Endothelial cell of umbilical vein (primary cell): ENCODE measurements at regions of chr4 and their contacts with region 1.

Region 1: DNA sequence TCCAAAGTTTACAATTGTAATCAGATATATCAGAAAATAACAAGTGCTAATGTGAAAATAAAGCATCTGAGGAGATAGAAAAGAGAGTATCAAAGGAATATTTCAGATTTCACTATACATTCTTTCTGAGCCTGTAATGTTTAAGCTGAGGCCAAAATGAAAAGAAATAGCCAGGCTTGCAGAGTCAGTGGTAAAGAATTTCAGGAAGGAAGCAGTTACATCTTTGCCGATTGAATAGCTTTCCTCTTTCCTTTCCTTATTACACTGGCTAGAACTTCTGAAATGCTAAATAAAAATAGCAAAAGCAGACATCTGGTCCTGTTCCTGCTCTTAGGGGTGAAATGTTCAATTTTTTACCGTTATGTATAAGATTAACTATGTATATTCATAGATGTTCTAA is 1441.6 kb upstream of the PCDH7 start:
- DNase-seq: peak; percentile 81
- H3K4me3 ChIP-seq: peak overlapping the region in 1 of 3 experiments; percentile 16
- H3K27ac ChIP-seq: peak overlapping the region; percentile 82
- H3K4me1 ChIP-seq: peaks cover 19% of the 10 kb centered on the region
- H3K27me3 ChIP-seq: no peaks in the 10 kb centered on the region
- CTCF ChIP-seq: no peak
- POLR2A ChIP-seq: no peak

Region 2: GRCh38 chr4:29081234-29081955 is 197.2 kb before region 1 on chr4:
- CTCF ChIA-PET with region 1: interaction called, 4 read pairs
- POLR2A ChIA-PET with region 1: no interaction called
- dilution Hi-C with region 1: no loop called
- intact Hi-C with region 1: loop called (anchors 5 kb)
- DNase-seq: peak; percentile 65
- H3K4me3 ChIP-seq: no peak overlapping the region
- H3K27ac ChIP-seq: no peak overlapping the region
- H3K4me1 ChIP-seq: no peaks in the 10 kb centered on the region
- H3K27me3 ChIP-seq: no peaks in the 10 kb centered on the region
- CTCF ChIP-seq: peak; percentile 26
- POLR2A ChIP-seq: no peak

Region 3: DNA sequence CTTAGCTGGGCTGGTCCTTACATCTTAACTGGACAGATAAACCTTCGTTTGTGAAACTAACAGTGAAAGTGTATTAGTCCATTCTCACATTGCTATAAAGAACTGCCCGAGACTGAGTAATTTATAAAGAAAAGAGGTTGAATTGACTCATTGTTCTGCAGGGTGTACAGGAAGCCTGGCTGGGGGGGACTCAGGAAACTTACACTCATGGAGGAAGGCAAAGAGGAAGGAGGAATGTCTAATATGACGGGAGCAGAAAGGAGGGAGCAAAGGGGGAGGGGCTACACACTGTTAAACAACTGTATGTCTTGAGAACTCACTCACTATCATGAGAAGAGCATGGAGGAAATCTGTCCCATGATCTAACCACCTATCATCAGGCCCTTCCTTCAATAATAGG is 124.9 kb before region 1 on chr4:
- CTCF ChIA-PET with region 1: no interaction called
- POLR2A ChIA-PET with region 1: no interaction called
- dilution Hi-C with region 1: no loop called
- intact Hi-C with region 1: loop called (anchors 1 kb)
- DNase-seq: peak; percentile 97
- H3K4me3 ChIP-seq: peak overlapping the region in 1 of 3 experiments; percentile 50
- H3K27ac ChIP-seq: peak overlapping the region; percentile 90
- H3K4me1 ChIP-seq: peaks cover 16% of the 10 kb centered on the region
- H3K27me3 ChIP-seq: no peaks in the 10 kb centered on the region
- CTCF ChIP-seq: no peak
- POLR2A ChIP-seq: no peak

Region 4: DNA sequence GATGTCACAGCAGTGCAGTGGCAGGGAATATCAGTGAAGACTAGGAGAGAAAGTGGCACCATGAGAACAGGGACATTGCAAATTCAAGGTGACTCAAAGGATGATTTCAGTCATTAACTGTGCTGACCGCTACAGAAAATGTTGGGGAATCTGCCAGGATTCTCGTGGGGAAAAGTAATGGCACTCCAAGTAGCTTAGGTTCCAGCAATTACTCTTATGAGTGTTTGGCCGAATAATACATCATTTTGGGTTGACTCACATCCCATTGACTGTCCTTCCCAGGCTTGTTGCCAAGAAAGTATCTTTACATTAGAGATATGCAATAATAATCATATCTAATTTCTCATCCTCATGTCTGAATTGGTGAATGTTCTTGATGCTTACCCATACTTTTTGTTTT is 30.5 kb after region 1 on chr4:
- CTCF ChIA-PET with region 1: no interaction called
- POLR2A ChIA-PET with region 1: no interaction called
- dilution Hi-C with region 1: no loop called
- intact Hi-C with region 1: loop called (anchors 1 kb)
- DNase-seq: peak; percentile 70
- H3K4me3 ChIP-seq: no peak overlapping the region
- H3K27ac ChIP-seq: peak overlapping the region; percentile 78
- H3K4me1 ChIP-seq: peaks cover 45% of the 10 kb centered on the region
- H3K27me3 ChIP-seq: no peaks in the 10 kb centered on the region
- CTCF ChIP-seq: no peak
- POLR2A ChIP-seq: no peak

Region 5: GRCh38 chr4:29326816-29327215 is 48.2 kb after region 1 on chr4:
- CTCF ChIA-PET with region 1: interaction called, 5 read pairs
- POLR2A ChIA-PET with region 1: no interaction called
- dilution Hi-C with region 1: no loop called
- intact Hi-C with region 1: loop called (anchors 1 kb)
- DNase-seq: peak; percentile 97
- H3K4me3 ChIP-seq: no peak overlapping the region
- H3K27ac ChIP-seq: peak overlapping the region; percentile 89
- H3K4me1 ChIP-seq: peaks cover 18% of the 10 kb centered on the region
- H3K27me3 ChIP-seq: no peaks in the 10 kb centered on the region
- CTCF ChIP-seq: no peak
- POLR2A ChIP-seq: no peak

Region 6: DNA sequence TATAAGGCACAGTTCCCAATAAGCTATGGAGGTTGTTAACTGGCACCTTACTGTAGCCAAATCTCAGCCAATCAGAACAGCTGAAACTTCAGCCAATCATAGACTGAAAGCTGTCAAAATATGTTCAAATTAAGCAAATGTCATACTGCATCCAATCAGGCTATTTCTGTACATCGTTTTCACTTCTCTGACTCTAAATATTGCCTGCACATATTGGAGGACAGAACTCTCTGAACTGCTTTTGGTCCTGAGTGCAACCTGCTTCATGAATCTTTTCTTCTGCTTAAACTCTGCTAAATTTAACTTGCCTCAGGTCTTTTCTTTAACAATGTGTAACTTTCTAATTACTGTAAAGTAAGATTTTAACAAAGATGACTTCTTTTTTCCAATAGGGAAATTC is 242.7 kb after region 1 on chr4:
- CTCF ChIA-PET with region 1: no interaction called
- POLR2A ChIA-PET with region 1: no interaction called
- dilution Hi-C with region 1: no loop called
- intact Hi-C with region 1: no loop called
- DNase-seq: no peak
- H3K4me3 ChIP-seq: no peak overlapping the region
- H3K27ac ChIP-seq: no peak overlapping the region
- H3K4me1 ChIP-seq: no peaks in the 10 kb centered on the region
- H3K27me3 ChIP-seq: no peaks in the 10 kb centered on the region
- CTCF ChIP-seq: no peak
- POLR2A ChIP-seq: no peak

Region 7: DNA sequence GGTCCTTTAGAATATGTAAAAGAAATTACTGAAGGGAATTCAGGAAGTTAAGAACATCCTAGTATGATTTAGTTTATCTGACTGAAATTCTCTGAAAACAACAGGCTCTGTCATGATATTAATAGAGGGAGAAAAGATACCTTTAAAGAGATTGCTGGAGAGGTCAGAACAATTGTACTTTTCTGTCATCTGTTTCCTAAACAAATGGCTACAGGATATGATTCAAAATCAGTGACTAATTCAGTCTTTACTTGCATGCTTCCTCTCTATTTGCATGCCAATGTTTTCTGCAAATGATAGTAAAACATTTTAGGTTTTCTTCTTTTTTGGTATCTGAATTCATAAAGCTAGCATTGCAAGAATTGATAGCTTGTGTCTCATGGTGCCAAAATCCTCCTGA is 824.9 kb after region 1 on chr4:
- CTCF ChIA-PET with region 1: no interaction called
- POLR2A ChIA-PET with region 1: no interaction called
- dilution Hi-C with region 1: no loop called
- intact Hi-C with region 1: loop called (anchors 1 kb)
- DNase-seq: peak; percentile 71
- H3K4me3 ChIP-seq: no peak overlapping the region
- H3K27ac ChIP-seq: peak overlapping the region; percentile 41
- H3K4me1 ChIP-seq: peaks cover 16% of the 10 kb centered on the region
- H3K27me3 ChIP-seq: no peaks in the 10 kb centered on the region
- CTCF ChIP-seq: no peak
- POLR2A ChIP-seq: peak; percentile 38

Region 8: GRCh38 chr4:30256080-30256832 is 977.7 kb after region 1 on chr4:
- CTCF ChIA-PET with region 1: no interaction called
- POLR2A ChIA-PET with region 1: interaction called, 15 read pairs
- dilution Hi-C with region 1: no loop called
- intact Hi-C with region 1: no loop called
- DNase-seq: no peak
- H3K4me3 ChIP-seq: no peak overlapping the region
- H3K27ac ChIP-seq: no peak overlapping the region
- H3K4me1 ChIP-seq: no peaks in the 10 kb centered on the region
- H3K27me3 ChIP-seq: no peaks in the 10 kb centered on the region
- CTCF ChIP-seq: no peak
- POLR2A ChIP-seq: no peak